ENCODE measurements at regions of chr5 and their contacts with region 1.

Region 1: DNA sequence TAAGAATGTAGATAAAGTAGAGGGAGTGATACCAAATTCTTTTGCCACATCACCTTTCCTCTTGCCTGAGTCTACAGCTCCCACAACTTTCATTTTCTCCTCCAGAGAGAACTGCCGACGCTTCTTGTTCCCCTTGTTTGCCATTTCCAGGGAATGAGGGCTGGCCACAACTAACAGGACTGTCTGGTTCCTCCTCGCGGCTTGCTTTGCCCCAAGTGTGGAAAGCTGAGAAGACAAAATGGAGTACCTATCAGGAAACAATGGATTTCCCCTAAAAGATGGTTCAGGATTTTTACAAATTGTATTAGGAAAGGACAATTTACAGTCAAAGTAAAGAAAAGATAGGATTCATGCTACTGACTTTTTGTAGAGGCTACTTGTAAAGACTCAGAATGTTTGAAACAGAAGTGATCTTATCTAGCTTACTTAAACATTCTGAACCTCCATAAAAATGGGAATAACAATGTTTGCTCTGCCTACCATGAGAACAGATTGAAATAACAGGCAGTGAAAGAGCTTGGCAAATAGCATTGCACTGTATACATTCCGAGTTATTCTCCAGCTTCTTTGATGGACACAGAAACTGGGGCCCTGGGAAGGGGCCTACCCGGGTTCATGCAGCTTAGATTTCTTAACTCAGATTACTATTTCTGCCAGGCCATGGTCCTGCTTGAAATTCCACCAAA is 4.1 kb downstream of the TIGD6 start:
- DNase-seq: no peak
- H3K27ac ChIP-seq: no peak overlapping the region
- CTCF ChIP-seq: no peak

Region 2: GRCh38 chr5:149240354-149240998 is 755.9 kb before region 1 on chr5:
- CTCF ChIA-PET with region 1: no interaction called
- POLR2A ChIA-PET with region 1: no interaction called
- DNase-seq: no peak
- H3K27ac ChIP-seq: no peak overlapping the region
- CTCF ChIP-seq: no peak

Region 3: DNA sequence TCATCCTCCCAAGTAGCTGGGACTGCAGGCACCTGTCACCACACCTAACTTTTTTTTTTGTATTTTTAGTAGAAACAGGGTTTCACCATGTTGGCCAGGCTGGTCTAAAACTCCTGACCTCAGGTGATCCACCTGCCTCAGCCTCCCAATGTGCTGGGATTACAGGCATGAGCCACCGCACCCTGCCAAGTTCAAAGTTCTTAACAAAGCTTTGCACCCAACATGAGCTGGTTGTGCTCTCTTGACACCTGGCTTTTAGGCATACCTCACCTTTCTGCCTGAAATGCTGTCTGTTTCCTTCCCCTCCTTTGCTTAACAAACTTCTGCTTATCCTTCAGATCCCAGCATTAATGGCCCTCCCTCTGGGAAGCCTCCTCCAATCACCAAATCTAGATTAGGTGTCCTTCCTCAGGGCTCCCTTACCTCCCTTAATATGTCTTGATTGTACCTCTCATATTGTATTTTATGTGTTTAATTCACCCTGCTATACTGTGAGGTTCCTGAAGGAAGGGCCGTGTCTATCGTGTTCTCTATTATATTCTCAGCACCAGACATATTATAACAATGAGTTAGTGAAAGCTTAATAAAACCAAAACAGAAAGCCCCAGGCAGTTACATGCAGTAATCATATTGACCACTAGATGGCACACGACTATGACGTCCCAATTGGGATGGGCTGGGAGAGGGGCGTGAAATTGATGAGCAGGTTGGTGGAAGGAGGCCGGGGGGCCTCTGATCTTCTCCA is 329.1 kb before region 1 on chr5:
- CTCF ChIA-PET with region 1: interaction called, 10 read pairs
- POLR2A ChIA-PET with region 1: no interaction called
- DNase-seq: peak; percentile 54
- H3K27ac ChIP-seq: no peak overlapping the region
- CTCF ChIP-seq: peak; percentile 88

Region 4: DNA sequence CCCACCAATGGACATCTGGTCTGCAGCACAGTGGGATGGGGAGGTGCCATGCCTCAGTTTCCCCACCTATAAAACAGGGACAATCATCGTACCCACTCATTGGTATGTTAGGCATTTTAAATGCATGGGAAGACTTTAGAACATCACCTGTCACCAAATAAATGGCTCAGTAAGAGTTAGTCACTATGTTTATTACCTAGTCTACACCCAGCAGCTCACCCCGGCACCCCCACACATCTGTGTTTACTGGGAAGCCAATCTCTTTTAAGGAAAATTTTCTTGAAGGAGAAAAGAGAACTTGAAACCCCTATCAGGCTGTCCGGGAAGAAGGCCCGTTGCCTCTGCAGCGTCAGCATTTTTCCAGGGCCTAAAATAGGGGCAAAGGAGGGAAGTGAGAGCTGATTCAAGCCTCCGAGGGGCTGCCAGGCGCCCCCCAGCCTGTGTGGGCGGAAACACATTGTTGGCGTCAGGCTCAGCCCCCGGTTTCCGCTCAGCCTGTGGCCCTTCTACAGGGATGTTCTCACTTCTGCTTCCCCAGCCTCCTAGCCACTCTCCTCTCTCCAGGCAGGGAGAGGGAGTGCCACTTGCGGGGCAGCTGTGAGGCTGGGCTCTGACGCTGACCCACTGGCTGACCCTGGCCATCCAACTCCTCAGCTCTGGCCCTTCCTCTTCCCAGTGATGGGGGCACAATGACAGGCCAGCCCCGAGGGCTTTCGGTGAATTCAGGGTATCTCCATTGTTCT is 85.4 kb after region 1 on chr5:
- CTCF ChIA-PET with region 1: no interaction called
- POLR2A ChIA-PET with region 1: no interaction called
- DNase-seq: no peak
- H3K27ac ChIP-seq: no peak overlapping the region
- CTCF ChIP-seq: no peak

Measured in RWPE1 (cell line).